Activated CD4-positive, alpha-beta memory T cell treated with anti-CD3 and anti-CD28 coated beads for 36 hours (primary cell): ENCODE measurements at regions of chr11 and their contacts with region 1.

Region 1: DNA sequence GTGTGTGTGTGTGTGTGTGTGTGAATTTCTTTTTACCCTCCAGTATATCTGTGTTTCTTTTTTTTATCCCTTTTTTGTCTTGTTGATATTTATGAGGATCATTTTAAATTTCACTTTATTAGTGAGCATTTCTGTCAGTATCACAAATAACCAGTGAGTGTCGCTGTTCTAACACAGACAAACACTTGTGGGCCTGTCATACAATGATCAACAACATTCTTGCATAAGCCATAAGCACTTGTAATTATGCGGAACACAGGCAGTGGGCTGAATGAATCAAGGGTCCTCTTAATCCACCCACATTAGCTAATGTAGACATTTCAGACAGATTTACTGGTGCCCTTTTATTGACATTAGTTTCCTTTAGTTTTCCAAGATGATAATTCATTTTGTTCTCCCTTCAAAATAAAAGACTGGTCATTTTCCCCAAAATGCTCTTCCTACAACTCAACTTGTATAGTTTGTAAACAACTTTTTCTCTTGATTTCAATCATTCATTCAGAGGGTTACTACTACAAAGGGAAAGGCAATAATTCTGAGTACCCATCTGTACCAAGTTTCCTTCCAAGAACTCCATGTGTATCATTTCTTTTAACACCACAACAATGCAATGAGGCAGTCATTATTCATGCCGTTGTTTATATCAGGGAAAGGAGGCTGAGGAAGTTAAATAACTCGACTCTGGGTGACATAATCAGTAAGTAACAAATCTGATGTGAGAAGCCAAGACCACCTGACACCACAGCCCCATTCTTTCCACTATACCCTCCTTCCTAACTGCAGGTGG is 34.5 kb upstream of the ANO3 start:
- DNase-seq: no peak
- H3K4me3 Mint-ChIP-seq: no peak overlapping the region
- H3K27ac Mint-ChIP-seq: no peak overlapping the region
- H3K4me1 Mint-ChIP-seq: no peaks in the 10 kb centered on the region
- H3K27me3 Mint-ChIP-seq: no peaks in the 10 kb centered on the region

Region 2: GRCh38 chr11:26649884-26650283 is 352.5 kb after region 1 on chr11:
- CTCF ChIA-PET with region 1: no interaction called
- POLR2A ChIA-PET with region 1: no interaction called
- intact Hi-C with region 1: loop called (anchors 1 kb)
- DNase-seq: peak; percentile 18
- H3K4me3 Mint-ChIP-seq: no peak overlapping the region
- H3K27ac Mint-ChIP-seq: no peak overlapping the region
- H3K4me1 Mint-ChIP-seq: no peaks in the 10 kb centered on the region
- H3K27me3 Mint-ChIP-seq: no peaks in the 10 kb centered on the region

Region 3: DNA sequence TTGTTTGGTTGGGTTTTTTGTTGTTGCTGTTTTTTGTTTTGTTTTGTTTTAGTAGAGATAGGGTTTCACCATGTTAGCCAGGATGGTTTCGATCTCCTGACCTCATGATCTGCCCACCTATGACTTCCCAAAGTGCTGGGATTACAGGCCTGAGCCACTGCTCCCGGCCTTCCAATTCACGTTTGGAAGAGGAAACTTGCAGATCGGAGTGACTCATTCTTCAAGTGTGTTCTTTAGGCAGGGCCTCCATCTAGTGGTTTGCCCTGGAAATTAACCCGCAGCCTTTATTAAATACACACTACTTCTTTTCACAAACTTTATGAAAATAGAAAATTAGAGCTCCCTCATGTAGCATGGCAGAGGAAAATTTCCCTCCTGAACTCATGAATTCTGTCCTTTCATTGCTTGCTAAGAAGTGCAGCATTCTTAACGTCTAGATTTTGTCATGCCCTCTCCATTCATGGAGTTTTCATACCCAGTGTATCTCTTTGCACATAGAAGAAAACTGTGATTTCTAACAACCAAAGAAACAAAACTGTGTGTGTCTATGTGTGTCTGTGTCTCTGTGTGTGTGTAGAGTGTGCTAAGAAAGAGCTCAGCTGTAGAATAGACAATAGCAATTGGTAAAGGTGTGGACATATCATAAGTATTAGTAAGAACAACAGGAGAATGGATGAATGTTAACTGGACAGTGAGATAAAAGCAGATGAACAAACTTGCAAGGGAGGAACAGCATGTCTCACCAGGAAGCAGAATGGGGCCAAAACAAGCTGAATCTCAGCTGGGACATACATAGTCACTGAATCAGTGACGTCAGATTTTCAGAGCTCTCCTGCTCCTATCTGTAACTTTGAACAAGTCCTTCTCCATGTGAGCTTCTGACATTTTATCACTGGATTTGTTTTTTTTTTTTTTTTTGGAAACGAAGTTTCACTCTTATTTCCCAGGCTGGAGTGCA is 861.6 kb after region 1 on chr11:
- CTCF ChIA-PET with region 1: interaction called, 3 read pairs
- POLR2A ChIA-PET with region 1: no interaction called
- intact Hi-C with region 1: loop called (anchors 2 kb)
- DNase-seq: peak; percentile 17
- H3K4me3 Mint-ChIP-seq: no peak overlapping the region
- H3K27ac Mint-ChIP-seq: no peak overlapping the region
- H3K4me1 Mint-ChIP-seq: no peaks in the 10 kb centered on the region
- H3K27me3 Mint-ChIP-seq: no peaks in the 10 kb centered on the region